Breast epithelium (tissue), 4 donors: ENCODE measurements at regions of chr13 and their contacts with region 1.

Region 1: GRCh38 chr13:20882206-20882605 is 20.3 kb downstream of the XPO4 start:
- DNase-seq: no peak
- H3K4me3 ChIP-seq: no peak overlapping the region
- H3K27ac ChIP-seq: no peak overlapping the region
- H3K4me1 ChIP-seq: no peaks in the 10 kb centered on the region
- H3K27me3 ChIP-seq: no peaks in the 10 kb centered on the region
- CTCF ChIP-seq: no peak
- POLR2A ChIP-seq: no peak

Region 2: DNA sequence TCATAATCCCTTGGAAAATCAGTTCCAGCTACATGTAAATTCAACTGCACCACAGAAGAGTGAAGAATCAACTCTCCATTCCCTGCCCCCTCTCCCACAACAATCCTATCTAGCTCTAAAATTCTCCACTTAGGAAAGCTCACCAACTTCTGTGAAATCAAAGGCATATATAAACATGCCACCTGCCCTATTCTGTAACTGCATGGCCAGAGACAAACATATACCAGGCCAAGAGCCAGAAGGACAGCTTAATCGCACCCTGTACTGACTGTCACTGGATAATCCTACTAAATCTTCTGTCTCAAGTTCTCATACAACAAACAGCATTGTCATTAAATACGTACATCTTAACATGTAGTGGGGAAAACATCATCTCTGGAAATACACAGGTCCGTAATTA is 50.3 kb before region 1 on chr13:
- intact Hi-C with region 1: loop called (anchors 2 kb)
- DNase-seq: no peak
- H3K4me3 ChIP-seq: no peak overlapping the region
- H3K27ac ChIP-seq: no peak overlapping the region
- H3K4me1 ChIP-seq: no peaks in the 10 kb centered on the region
- H3K27me3 ChIP-seq: no peaks in the 10 kb centered on the region
- CTCF ChIP-seq: no peak
- POLR2A ChIP-seq: no peak

Region 3: GRCh38 chr13:21567714-21568113 is 685.5 kb after region 1 on chr13:
- intact Hi-C with region 1: no loop called
- DNase-seq: no peak
- H3K4me3 ChIP-seq: no peak overlapping the region
- H3K27ac ChIP-seq: no peak overlapping the region
- H3K4me1 ChIP-seq: no peaks in the 10 kb centered on the region
- H3K27me3 ChIP-seq: no peaks in the 10 kb centered on the region
- CTCF ChIP-seq: no peak
- POLR2A ChIP-seq: no peak